ENCODE measurements at regions of chr11 and their contacts with region 1.

Region 1: GRCh38 chr11:75142714-75143419 is 8.0 kb upstream of the SLCO2B1 start:
- DNase-seq: peak; percentile 20 to 88 (median 70)
- ATAC-seq: peak; percentile 94
- H3K4me3 ChIP-seq: no peak overlapping the region
- H3K4me3 Mint-ChIP-seq: no peak overlapping the region
- H3K27ac ChIP-seq: peak overlapping the region; percentile 37 to 55
- H3K27ac Mint-ChIP-seq: peak overlapping the region; percentile 18
- H3K4me1 ChIP-seq: peaks cover 34% of the 10 kb centered on the region
- H3K4me1 Mint-ChIP-seq: peaks cover 43% of the 10 kb centered on the region
- H3K27me3 ChIP-seq: no peaks in the 10 kb centered on the region
- H3K27me3 Mint-ChIP-seq: no peaks in the 10 kb centered on the region
- CTCF ChIP-seq: no peak

Region 2: GRCh38 chr11:74929431-74930363 is 213.2 kb before region 1 on chr11:
- CTCF ChIA-PET with region 1: interaction called, 7 read pairs
- POLR2A ChIA-PET with region 1: no interaction called
- intact Hi-C with region 1: loop called (anchors 1 to 5 kb)
- DNase-seq: peak; percentile 25 to 88 (median 56)
- ATAC-seq: peak; percentile 82
- H3K4me3 ChIP-seq: no peak overlapping the region
- H3K4me3 Mint-ChIP-seq: no peak overlapping the region
- H3K27ac ChIP-seq: no peak overlapping the region
- H3K27ac Mint-ChIP-seq: no peak overlapping the region
- H3K4me1 ChIP-seq: no peaks in the 10 kb centered on the region
- H3K4me1 Mint-ChIP-seq: no peaks in the 10 kb centered on the region
- H3K27me3 ChIP-seq: no peaks in the 10 kb centered on the region
- H3K27me3 Mint-ChIP-seq: no peaks in the 10 kb centered on the region
- CTCF ChIP-seq: peak; percentile 97

Region 3: GRCh38 chr11:75022759-75023396 is 120.0 kb before region 1 on chr11:
- CTCF ChIA-PET with region 1: interaction called, 3 read pairs
- POLR2A ChIA-PET with region 1: no interaction called
- intact Hi-C with region 1: loop called in 1 of 2 experiments (anchors 5 kb)
- DNase-seq: peak; percentile 59 to 84 (median 70)
- ATAC-seq: peak; percentile 86
- H3K4me3 ChIP-seq: no peak overlapping the region
- H3K4me3 Mint-ChIP-seq: no peak overlapping the region
- H3K27ac ChIP-seq: no peak overlapping the region
- H3K27ac Mint-ChIP-seq: no peak overlapping the region
- H3K4me1 ChIP-seq: no peaks in the 10 kb centered on the region
- H3K4me1 Mint-ChIP-seq: no peaks in the 10 kb centered on the region
- H3K27me3 ChIP-seq: no peaks in the 10 kb centered on the region
- H3K27me3 Mint-ChIP-seq: no peaks in the 10 kb centered on the region
- CTCF ChIP-seq: peak; percentile 96

Region 4: DNA sequence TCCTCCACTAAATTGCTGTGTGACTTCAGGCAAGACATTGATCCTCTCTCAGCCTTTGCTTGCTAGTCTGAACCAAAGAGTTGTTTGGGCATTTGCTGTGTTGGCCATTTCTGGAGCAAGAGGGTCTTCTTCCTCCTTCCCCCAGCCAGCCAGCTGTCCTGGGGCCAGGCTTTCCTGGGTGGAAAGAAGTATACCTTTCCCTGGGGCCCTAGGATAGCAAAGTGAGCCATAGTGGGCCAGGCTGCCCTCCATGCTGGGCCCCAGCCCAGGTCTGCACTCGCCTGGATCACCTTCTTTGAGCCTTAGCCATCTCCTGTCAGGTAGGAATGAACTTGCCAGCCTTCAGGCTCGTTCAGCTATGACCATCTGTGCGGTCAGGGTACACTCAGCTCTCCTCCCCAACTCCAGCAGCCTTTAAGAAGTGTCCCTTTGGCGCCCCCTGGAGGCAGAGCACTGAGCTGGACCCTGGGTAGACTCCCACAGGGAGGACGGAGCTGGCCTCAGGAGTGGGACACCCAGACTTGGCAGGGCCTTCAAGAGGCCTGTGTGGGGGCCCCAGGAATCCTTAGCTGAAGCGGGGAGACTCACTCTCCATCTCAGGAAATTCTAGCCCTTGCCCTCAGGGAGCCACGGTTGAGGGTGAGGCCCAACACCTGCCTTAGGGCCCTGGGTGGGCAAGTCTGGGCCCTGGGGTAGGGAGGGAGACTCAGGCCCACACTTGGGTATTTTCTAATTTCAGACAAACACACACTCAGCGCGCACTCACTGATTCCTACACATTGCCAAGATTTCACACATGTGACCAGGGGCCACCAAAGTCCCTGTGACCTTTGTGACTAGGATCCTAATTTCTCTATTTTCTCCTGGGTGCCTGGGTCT is 62.1 kb after region 1 on chr11:
- CTCF ChIA-PET with region 1: interaction called, 57 read pairs
- POLR2A ChIA-PET with region 1: interaction called, 11 read pairs
- intact Hi-C with region 1: loop called (anchors 1 kb)
- DNase-seq: peak; percentile 66 to 90 (median 78)
- ATAC-seq: peak; percentile 74
- H3K4me3 ChIP-seq: no peak overlapping the region
- H3K4me3 Mint-ChIP-seq: no peak overlapping the region
- H3K27ac ChIP-seq: no peak overlapping the region
- H3K27ac Mint-ChIP-seq: no peak overlapping the region
- H3K4me1 ChIP-seq: no peaks in the 10 kb centered on the region
- H3K4me1 Mint-ChIP-seq: no peaks in the 10 kb centered on the region
- H3K27me3 ChIP-seq: peaks cover 2 to 9% of the 10 kb centered on the region in 2 experiments
- H3K27me3 Mint-ChIP-seq: peaks cover 3% of the 10 kb centered on the region
- CTCF ChIP-seq: peak; percentile 87

Region 5: GRCh38 chr11:75241036-75241905 is 98.4 kb after region 1 on chr11:
- CTCF ChIA-PET with region 1: interaction called, 60 read pairs
- POLR2A ChIA-PET with region 1: interaction called, 19 read pairs
- intact Hi-C with region 1: no loop called
- DNase-seq: peak; percentile 64 to 93 (median 85)
- ATAC-seq: peak; percentile 88
- H3K4me3 ChIP-seq: peak overlapping the region; percentile 30
- H3K4me3 Mint-ChIP-seq: peak overlapping the region; percentile 82
- H3K27ac ChIP-seq: no peak overlapping the region
- H3K27ac Mint-ChIP-seq: no peak overlapping the region
- H3K4me1 ChIP-seq: peaks cover 15% of the 10 kb centered on the region
- H3K4me1 Mint-ChIP-seq: peaks cover 5% of the 10 kb centered on the region
- H3K27me3 ChIP-seq: peaks cover 33% of the 10 kb centered on the region in 2 experiments
- H3K27me3 Mint-ChIP-seq: peaks cover 63% of the 10 kb centered on the region
- CTCF ChIP-seq: peak; percentile 40

Region 6: DNA sequence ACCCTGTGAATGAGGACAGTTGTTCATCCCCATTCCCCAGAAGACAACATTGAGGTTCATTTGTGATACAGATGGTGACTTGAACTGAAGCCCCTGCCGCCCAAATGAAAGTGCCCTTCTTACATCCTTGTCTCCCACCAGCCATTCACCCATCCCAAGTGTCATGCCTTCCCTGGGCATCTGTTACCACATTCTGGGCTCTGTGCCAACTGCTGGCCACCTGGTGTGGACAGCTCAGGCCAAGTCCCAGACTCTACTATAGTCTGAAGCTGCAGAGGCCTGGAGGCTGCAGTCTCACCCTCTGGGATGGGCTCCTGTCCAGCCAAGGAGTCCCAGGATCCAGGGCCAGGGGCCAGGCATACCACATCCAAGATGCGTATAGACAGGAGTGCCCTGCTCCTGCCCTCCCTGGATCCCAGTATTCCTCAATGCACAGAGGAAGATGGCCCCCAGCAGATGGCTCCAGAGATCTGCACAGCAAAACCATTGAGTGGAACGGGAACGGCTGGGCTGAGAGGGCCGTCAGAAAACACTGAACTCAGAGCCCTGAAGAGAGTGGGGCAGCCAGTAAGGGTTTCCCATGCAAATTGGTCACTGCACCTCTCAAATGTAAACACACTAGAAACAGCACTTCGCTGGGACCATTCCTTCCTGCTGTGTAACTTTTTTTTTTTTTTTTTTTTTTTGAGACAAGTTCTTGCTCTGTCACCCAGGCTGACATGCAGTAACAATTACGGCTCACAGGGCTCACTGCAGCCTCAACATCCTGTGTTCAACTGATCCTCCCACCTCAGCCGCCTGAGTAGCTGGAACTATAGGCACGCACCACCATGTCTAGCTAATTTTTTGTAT is 185.8 kb after region 1 on chr11:
- CTCF ChIA-PET with region 1: no interaction called
- POLR2A ChIA-PET with region 1: no interaction called
- intact Hi-C with region 1: no loop called
- DNase-seq: peak; percentile 20 to 80 (median 58)
- ATAC-seq: peak; percentile 96
- H3K4me3 ChIP-seq: no peak overlapping the region
- H3K4me3 Mint-ChIP-seq: peak overlapping the region; percentile 80
- H3K27ac ChIP-seq: peak overlapping the region; percentile 44 to 64
- H3K27ac Mint-ChIP-seq: peak overlapping the region; percentile 96
- H3K4me1 ChIP-seq: peaks cover 62% of the 10 kb centered on the region
- H3K4me1 Mint-ChIP-seq: peaks cover 80% of the 10 kb centered on the region
- H3K27me3 ChIP-seq: no peaks in the 10 kb centered on the region
- H3K27me3 Mint-ChIP-seq: no peaks in the 10 kb centered on the region
- CTCF ChIP-seq: peak; percentile 57